ENCODE measurements at regions of chr10 and their contacts with region 1.

Region 1: DNA sequence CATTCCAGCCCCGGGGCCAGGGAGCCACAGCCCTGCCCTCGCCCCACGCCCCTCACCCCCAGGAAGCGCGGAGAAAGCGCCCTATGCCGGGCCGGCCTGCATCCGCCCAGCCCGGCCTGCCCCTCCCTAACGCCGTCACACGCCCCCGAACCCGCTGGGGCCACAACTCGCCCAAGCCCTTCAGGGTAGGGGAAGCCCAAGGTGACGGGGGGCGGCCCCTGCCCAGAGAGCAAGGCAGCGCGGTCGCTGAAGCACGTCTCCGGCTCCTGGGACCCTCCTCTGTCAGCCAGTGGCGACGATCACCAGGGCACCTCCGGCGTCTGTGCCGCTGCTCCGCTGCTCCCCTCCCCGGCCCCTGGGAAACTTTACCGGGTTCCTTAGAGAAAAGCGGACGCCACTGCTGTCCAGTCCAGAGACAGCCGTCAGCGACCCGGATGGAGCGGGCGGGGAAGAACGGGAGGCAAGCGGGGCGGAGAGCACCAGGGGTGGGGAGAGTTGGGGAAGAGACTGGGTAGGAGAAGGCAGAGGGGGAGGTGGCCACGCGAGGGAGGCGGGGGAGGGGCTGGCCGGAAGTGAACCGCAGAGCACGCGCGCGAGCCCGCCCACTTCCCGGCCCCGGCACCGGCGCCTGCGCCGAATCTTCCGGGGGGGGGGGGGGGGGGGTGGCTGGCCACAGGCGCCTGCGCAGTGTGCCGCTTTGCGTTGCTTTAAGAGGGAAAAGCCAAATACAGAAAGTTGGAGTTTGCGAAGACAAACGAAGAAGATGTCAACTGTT is at the start of gene HERC4:
- DNase-seq: peak; percentile 83 to 96 (median 90)
- ATAC-seq: peak; percentile 90
- H3K4me3 ChIP-seq: peak within 1 kb of the TSS; percentile 96
- H3K4me3 Mint-ChIP-seq: peak within 1 kb of the TSS; percentile 96
- H3K27ac ChIP-seq: peak within 1 kb of the TSS; percentile 91 to 96
- H3K27ac Mint-ChIP-seq: peak within 1 kb of the TSS; percentile 93
- H3K4me1 ChIP-seq: peaks cover 38% of the 10 kb centered on the region
- H3K4me1 Mint-ChIP-seq: peaks cover 40% of the 10 kb centered on the region
- H3K27me3 ChIP-seq: no peaks in the 10 kb centered on the region
- H3K27me3 Mint-ChIP-seq: no peaks in the 10 kb centered on the region
- CTCF ChIP-seq: no peak
- total RNA-seq, gene HERC4: 28.4 to 29.2 TPM

Region 2: DNA sequence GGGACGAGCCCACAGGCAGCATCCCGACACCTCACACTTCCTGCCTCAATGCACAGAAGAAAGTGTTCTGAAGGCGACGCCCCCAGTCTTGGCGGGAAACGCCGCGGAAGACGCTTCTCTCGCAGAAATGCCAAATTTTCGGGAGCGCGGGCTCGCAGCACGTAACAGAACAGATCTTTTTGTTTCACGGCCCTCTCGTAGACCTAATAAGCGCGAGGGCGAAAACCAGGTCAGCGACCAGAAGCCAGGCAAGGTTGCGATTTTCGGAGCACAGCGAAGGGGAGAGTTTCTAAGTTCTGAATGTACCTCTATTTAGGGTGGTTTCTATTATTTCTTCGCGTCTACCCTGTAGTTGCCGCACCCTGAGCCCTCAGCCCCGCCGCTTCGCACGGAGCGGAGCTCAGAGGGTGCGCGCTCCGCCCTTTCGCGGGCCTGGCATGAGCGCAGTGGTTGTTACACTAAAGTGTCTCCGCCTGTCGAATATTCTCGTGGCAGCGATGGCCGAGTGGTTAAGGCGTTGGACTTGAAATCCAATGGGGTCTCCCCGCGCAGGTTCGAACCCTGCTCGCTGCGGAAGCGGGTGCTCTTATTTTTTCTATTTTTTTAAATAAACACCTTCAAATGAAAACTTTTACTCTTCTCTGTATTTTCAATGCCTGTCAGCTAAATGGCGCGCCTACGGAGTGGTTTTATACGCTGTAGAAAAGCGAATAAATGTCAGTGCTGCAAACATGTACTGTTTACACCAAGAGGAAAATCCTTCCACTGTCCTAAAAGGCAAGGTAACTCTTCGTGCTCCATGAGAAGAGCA is 310.7 kb before region 1 on chr10:
- CTCF ChIA-PET with region 1: no interaction called
- POLR2A ChIA-PET with region 1: no interaction called
- intact Hi-C with region 1: loop called (anchors 1 to 2 kb)
- DNase-seq: peak; percentile 96 to 100 (median 97)
- ATAC-seq: peak; percentile 80
- H3K4me3 ChIP-seq: peak overlapping the region; percentile 83 to 92
- H3K4me3 Mint-ChIP-seq: peak overlapping the region; percentile 92
- H3K27ac ChIP-seq: peak overlapping the region; percentile 84 to 89
- H3K27ac Mint-ChIP-seq: peak overlapping the region; percentile 97
- H3K4me1 ChIP-seq: no peaks in the 10 kb centered on the region
- H3K4me1 Mint-ChIP-seq: peaks cover 8% of the 10 kb centered on the region
- H3K27me3 ChIP-seq: no peaks in the 10 kb centered on the region
- H3K27me3 Mint-ChIP-seq: peaks cover 2% of the 10 kb centered on the region
- CTCF ChIP-seq: no peak

Region 3: GRCh38 chr10:67884313-67884841 is 190.6 kb before region 1 on chr10 and contains the start of gene SIRT1:
- CTCF ChIA-PET with region 1: no interaction called
- POLR2A ChIA-PET with region 1: interaction called, 4 read pairs
- intact Hi-C with region 1: loop called (anchors 1 to 2 kb)
- DNase-seq: peak; percentile 84 to 97 (median 94)
- ATAC-seq: peak; percentile 72
- H3K4me3 ChIP-seq: peak within 1 kb of the TSS; percentile 69 to 70
- H3K4me3 Mint-ChIP-seq: peak within 1 kb of the TSS; percentile 89
- H3K27ac ChIP-seq: peak within 1 kb of the TSS; percentile 57 to 89
- H3K27ac Mint-ChIP-seq: peak within 1 kb of the TSS; percentile 94
- H3K4me1 ChIP-seq: peaks cover 23% of the 10 kb centered on the region
- H3K4me1 Mint-ChIP-seq: peaks cover 35% of the 10 kb centered on the region
- H3K27me3 ChIP-seq: no peaks in the 10 kb centered on the region
- H3K27me3 Mint-ChIP-seq: no peaks in the 10 kb centered on the region
- CTCF ChIP-seq: no peak
- total RNA-seq, gene SIRT1: 72.6 to 74.5 TPM

Region 4: GRCh38 chr10:68406815-68407548 is 332.0 kb after region 1 on chr10 and contains the start of gene RUFY2:
- CTCF ChIA-PET with region 1: no interaction called
- POLR2A ChIA-PET with region 1: no interaction called
- intact Hi-C with region 1: loop called (anchors 1 to 5 kb)
- DNase-seq: peak; percentile 56 to 89 (median 76)
- ATAC-seq: peak; percentile 92
- H3K4me3 ChIP-seq: peak within 1 kb of the TSS; percentile 95 to 99
- H3K4me3 Mint-ChIP-seq: peak within 1 kb of the TSS; percentile 92
- H3K27ac ChIP-seq: peak within 1 kb of the TSS; percentile 69 to 78
- H3K27ac Mint-ChIP-seq: peak within 1 kb of the TSS; percentile 82
- H3K4me1 ChIP-seq: peaks cover 10% of the 10 kb centered on the region
- H3K4me1 Mint-ChIP-seq: peaks cover 19% of the 10 kb centered on the region
- H3K27me3 ChIP-seq: no peaks in the 10 kb centered on the region
- H3K27me3 Mint-ChIP-seq: no peaks in the 10 kb centered on the region
- CTCF ChIP-seq: peak; percentile 81
- total RNA-seq, gene RUFY2: 11.7 to 13.7 TPM

Region 5: DNA sequence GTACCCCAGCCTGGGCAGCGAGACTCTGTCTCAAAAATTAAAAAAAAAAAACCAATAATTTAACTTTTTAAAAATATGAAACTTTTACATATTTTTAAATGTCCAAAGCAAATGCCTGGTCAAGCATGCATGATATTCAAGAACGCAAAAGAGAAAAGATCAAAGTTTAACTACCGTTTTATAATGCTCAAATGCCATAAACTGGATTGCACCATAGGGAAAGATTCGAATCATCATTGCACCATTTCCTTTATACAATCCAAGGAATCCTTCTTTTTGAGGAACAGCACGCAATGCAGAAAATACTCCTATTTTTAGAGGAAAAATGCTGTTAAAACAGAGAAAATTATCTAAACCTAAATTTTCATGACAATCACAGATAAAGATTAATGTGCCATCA is 431.4 kb after region 1 on chr10:
- CTCF ChIA-PET with region 1: no interaction called
- POLR2A ChIA-PET with region 1: no interaction called
- intact Hi-C with region 1: no loop called
- DNase-seq: no peak
- ATAC-seq: no peak
- H3K4me3 ChIP-seq: no peak overlapping the region
- H3K4me3 Mint-ChIP-seq: no peak overlapping the region
- H3K27ac ChIP-seq: no peak overlapping the region
- H3K27ac Mint-ChIP-seq: no peak overlapping the region
- H3K4me1 ChIP-seq: no peaks in the 10 kb centered on the region
- H3K4me1 Mint-ChIP-seq: no peaks in the 10 kb centered on the region
- H3K27me3 ChIP-seq: no peaks in the 10 kb centered on the region
- H3K27me3 Mint-ChIP-seq: no peaks in the 10 kb centered on the region
- CTCF ChIP-seq: no peak

Region 6: GRCh38 chr10:68720793-68721672 is 646.1 kb after region 1 on chr10 and contains the start of gene CCAR1:
- CTCF ChIA-PET with region 1: no interaction called
- POLR2A ChIA-PET with region 1: no interaction called
- intact Hi-C with region 1: loop called in 1 of 2 experiments (anchors 10 kb)
- DNase-seq: peak; percentile 92 to 99 (median 97)
- ATAC-seq: peak; percentile 95
- H3K4me3 ChIP-seq: peak within 1 kb of the TSS; percentile 87 to 98
- H3K4me3 Mint-ChIP-seq: peak within 1 kb of the TSS; percentile 100
- H3K27ac ChIP-seq: peak within 1 kb of the TSS; percentile 83 to 95
- H3K27ac Mint-ChIP-seq: peak within 1 kb of the TSS; percentile 99
- H3K4me1 ChIP-seq: peaks cover 10% of the 10 kb centered on the region
- H3K4me1 Mint-ChIP-seq: peaks cover 20% of the 10 kb centered on the region
- H3K27me3 ChIP-seq: no peaks in the 10 kb centered on the region
- H3K27me3 Mint-ChIP-seq: no peaks in the 10 kb centered on the region
- CTCF ChIP-seq: no peak
- total RNA-seq, gene CCAR1: 70.8 to 79.1 TPM

Measured in CD8-positive, alpha-beta T cell (primary cell).